WTC11 (cell line): ENCODE measurements at regions of chr20 and their contacts with region 1.

Region 1: DNA sequence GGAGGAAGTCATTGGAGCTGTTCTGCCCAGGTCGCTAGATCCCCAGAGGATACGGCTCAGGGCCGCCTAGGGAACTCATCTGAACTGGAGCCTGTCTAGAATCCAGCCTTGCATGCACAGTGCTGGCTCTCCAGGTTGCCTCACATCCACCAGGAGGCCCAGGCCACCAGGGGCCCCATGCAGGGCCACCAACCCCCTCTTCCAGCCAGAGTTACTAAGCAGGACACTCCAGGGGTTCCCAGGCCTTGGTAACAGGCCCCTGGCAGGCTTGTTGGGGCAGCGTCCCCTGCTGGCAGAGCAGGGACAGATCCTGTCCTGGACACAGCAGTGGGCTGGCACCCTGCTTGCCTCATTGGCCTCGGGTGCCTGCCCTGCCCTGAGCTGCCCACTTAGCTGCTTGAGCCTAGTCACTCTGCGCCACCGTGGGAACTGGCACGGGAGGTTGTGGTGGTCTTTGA is 35.3 kb downstream of the EFCAB8 start:
- DNase-seq: peak; percentile 83
- ATAC-seq: peak; percentile 88
- H3K4me3 Mint-ChIP-seq: no peak overlapping the region
- H3K27ac Mint-ChIP-seq: no peak overlapping the region
- H3K4me1 Mint-ChIP-seq: peaks cover 5% of the 10 kb centered on the region
- H3K27me3 Mint-ChIP-seq: no peaks in the 10 kb centered on the region
- CTCF ChIP-seq: peak; percentile 82

Region 2: DNA sequence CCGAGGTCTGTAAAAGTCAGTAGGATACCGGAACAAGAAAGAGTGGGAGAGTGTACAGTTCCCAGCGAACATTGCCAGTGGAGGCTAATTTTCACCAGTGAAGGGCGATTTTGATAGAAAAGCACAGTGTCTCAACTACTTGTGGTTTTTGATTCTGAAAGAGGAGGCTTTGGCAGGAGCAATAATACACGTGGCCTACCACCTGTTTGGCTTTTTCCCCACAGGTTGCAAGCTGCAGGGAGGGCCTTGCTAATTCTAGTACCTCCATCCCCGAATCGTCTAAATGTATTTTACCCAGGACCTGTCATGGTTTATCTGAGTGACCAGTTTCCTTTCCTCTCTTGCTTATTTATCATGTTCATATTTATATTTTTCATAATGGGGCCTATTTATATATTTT is 38.7 kb before region 1 on chr20:
- CTCF ChIA-PET with region 1: interaction called, 20 read pairs
- POLR2A ChIA-PET with region 1: no interaction called
- DNase-seq: no peak
- ATAC-seq: no peak
- H3K4me3 Mint-ChIP-seq: no peak overlapping the region
- H3K27ac Mint-ChIP-seq: peak overlapping the region; percentile 68
- H3K4me1 Mint-ChIP-seq: peaks cover 48% of the 10 kb centered on the region
- H3K27me3 Mint-ChIP-seq: no peaks in the 10 kb centered on the region
- CTCF ChIP-seq: no peak

Region 3: GRCh38 chr20:32877507-32877906 is 16.5 kb before region 1 on chr20:
- CTCF ChIA-PET with region 1: interaction called, 10 read pairs
- POLR2A ChIA-PET with region 1: no interaction called
- DNase-seq: no peak
- ATAC-seq: peak; percentile 75
- H3K4me3 Mint-ChIP-seq: no peak overlapping the region
- H3K27ac Mint-ChIP-seq: peak overlapping the region; percentile 84; the same call in 1 of the 2 replicates
- H3K4me1 Mint-ChIP-seq: peaks cover 5% of the 10 kb centered on the region; the same call in 1 of the 2 replicates
- H3K27me3 Mint-ChIP-seq: no peaks in the 10 kb centered on the region
- CTCF ChIP-seq: no peak